ENCODE measurements at regions of chr2 and their contacts with region 1.

Region 1: GRCh38 chr2:25376750-25377621 is 35.3 kb upstream of the DNMT3A start:
- DNase-seq: peak; percentile 90 to 96 (median 96)
- H3K4me3 ChIP-seq: peak overlapping the region in 4 of 7 experiments; percentile 2 to 58 (median 52)
- H3K27ac ChIP-seq: no peak overlapping the region
- H3K4me1 ChIP-seq: peaks cover 0 to 34% (median 22%) of the 10 kb centered on the region in 4 experiments
- H3K27me3 ChIP-seq: no peaks in the 10 kb centered on the region

Region 2: DNA sequence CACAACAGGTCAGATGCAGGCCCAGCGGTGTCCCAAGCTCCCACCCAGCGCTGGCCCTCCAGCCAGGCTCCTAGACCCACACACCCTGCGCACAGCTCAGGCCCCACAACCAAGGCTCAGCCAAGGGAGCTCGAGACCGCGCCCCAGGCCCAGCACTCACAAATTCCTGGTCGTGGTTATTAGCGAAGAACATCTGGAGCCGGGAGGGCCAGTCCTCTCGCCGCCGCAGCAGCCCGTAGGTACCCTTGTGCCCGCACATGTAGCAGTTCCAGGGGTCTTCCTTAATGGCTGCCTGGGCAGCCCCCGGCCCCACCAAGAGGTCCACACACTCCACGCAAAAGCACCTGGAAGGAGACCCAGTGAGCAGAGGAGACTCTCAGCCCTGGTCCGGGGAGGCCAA is 133.0 kb before region 1 on chr2:
- CTCF ChIA-PET with region 1: no interaction called
- POLR2A ChIA-PET with region 1: no interaction called
- DNase-seq: no peak
- H3K4me3 ChIP-seq: no peak overlapping the region
- H3K27ac ChIP-seq: no peak overlapping the region
- H3K4me1 ChIP-seq: no peaks in the 10 kb centered on the region
- H3K27me3 ChIP-seq: no peaks in the 10 kb centered on the region

Region 3: DNA sequence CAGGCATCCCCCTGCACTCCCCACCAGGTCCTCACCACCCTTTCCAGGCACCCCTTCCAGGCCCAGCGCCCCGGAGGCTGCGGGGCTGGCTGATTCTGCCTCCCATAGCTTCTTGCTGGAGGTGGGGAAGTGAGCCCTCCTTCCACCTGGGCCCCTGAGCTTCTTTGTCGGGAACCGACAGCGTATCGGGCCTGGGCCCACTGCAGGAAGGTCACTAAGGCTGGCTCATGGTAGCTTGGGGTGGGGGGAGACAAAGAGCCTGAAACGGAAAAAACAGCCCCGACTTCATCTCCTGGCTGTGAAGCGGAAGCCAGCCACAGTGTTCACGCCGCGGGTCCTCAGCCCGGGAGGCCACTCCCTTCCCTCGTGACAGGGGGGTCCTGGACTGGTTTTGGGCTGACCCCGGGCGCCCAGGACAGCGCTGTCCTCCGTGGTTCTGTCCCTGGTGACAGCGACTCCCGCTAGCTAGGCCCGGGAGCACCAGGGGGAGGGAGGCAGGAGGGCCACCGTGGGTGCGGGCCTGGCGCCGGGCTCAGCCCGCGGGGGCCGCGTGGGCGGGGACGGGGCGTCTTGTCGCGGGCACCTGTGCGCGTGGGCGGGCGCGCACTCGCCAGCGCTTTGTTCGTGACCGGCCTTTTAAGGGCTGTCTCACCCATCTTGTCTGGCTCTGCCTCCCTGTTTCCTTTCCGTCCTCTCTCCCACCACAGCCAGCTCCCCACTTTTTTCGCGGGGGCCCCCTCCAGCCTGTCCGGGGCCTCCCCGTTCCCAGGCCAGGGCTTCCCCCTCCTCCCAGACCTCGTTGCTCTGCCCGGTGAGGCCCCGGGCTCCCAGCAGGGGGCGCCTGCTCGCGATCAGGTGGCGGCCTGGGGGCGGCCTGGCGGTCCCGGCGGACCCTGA is 100.2 kb before region 1 on chr2:
- CTCF ChIA-PET with region 1: interaction called, 11 read pairs
- POLR2A ChIA-PET with region 1: no interaction called
- DNase-seq: peak; percentile 71 to 86 (median 82)
- H3K4me3 ChIP-seq: peak overlapping the region in 5 of 7 experiments; percentile 6 to 58 (median 56)
- H3K27ac ChIP-seq: peak overlapping the region; percentile 75 to 83
- H3K4me1 ChIP-seq: peaks cover 22 to 79% (median 75%) of the 10 kb centered on the region in 4 experiments
- H3K27me3 ChIP-seq: no peaks in the 10 kb centered on the region

Region 4: GRCh38 chr2:25362049-25362433 is 14.9 kb before region 1 on chr2:
- CTCF ChIA-PET with region 1: interaction called, 24 read pairs
- POLR2A ChIA-PET with region 1: interaction called, 9 read pairs
- DNase-seq: peak; percentile 91 to 95 (median 92)
- H3K4me3 ChIP-seq: peak overlapping the region; percentile 37 to 90 (median 77)
- H3K27ac ChIP-seq: peak overlapping the region; percentile 27 to 75
- H3K4me1 ChIP-seq: peaks cover 0 to 14% (median 10%) of the 10 kb centered on the region in 4 experiments
- H3K27me3 ChIP-seq: no peaks in the 10 kb centered on the region

Region 5: DNA sequence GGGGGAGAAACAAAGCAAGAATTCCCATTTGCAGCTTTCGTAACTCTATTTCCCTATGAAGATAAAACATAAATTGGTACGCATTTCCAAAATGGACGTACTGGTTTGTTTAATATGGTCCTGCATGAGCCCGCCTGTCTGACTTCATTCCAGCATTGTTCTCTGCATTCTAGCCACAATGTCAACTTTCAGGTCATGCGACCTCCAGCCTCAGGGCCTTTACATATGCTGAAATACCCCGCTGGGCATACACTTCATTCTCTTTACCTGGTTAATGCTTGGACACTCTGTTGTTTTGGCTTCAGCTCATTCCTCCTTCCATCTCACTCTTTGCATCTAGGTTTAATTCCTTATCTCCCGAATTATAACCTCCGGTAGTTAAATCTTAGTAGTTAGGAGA is 68.5 kb after region 1 on chr2:
- CTCF ChIA-PET with region 1: no interaction called
- POLR2A ChIA-PET with region 1: no interaction called
- DNase-seq: no peak
- H3K4me3 ChIP-seq: no peak overlapping the region
- H3K27ac ChIP-seq: no peak overlapping the region
- H3K4me1 ChIP-seq: no peaks in the 10 kb centered on the region
- H3K27me3 ChIP-seq: no peaks in the 10 kb centered on the region

Region 6: GRCh38 chr2:25567406-25567805 is 190.4 kb after region 1 on chr2:
- CTCF ChIA-PET with region 1: interaction called, 18 read pairs
- POLR2A ChIA-PET with region 1: no interaction called
- DNase-seq: peak; percentile 78 to 88 (median 88)
- H3K4me3 ChIP-seq: no peak overlapping the region
- H3K27ac ChIP-seq: no peak overlapping the region
- H3K4me1 ChIP-seq: peaks cover 10 to 17% (median 16%) of the 10 kb centered on the region in 4 experiments
- H3K27me3 ChIP-seq: no peaks in the 10 kb centered on the region